Endothelial cell of umbilical vein (primary cell): ENCODE measurements at regions of chr19 and their contacts with region 1.

Region 1: GRCh38 chr19:5622463-5623396 is at the starts of genes SAFB and SAFB2:
- DNase-seq: peak; percentile 100
- H3K4me3 ChIP-seq: peak within 1 kb of the TSS; percentile 82 to 96 (median 93)
- H3K27ac ChIP-seq: peak within 1 kb of the TSS; percentile 63
- H3K4me1 ChIP-seq: peaks cover 28% of the 10 kb centered on the region
- H3K27me3 ChIP-seq: no peaks in the 10 kb centered on the region
- CTCF ChIP-seq: no peak
- POLR2A ChIP-seq: peak; percentile 94
- total RNA-seq, gene SAFB: 96.8 and 109 TPM in 2 replicates
- total RNA-seq, gene SAFB2: 83.7 and 85.9 TPM in 2 replicates

Region 2: DNA sequence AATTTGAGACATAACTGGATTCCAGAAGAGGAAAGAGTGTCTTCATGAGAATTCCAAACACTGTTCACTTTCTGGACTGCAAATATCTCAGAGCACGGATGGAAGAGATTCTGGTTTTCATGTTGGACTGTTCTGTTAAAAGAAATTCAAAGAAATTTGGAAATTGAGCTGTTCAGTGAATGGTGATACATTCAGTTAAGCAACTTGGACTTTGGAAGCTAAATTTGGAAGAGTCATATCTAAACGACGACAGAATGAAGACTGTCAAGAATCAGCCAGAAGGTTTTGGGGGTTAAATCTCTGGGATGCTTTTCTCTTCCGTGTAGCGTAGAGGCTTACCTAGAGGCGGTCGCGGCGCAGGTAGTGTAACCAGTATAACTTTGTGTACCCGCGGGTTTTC is 25.7 kb after region 1 on chr19:
- CTCF ChIA-PET with region 1: no interaction called
- POLR2A ChIA-PET with region 1: no interaction called
- dilution Hi-C with region 1: no loop called
- intact Hi-C with region 1: no loop called
- DNase-seq: no peak
- H3K4me3 ChIP-seq: no peak overlapping the region
- H3K27ac ChIP-seq: no peak overlapping the region
- H3K4me1 ChIP-seq: no peaks in the 10 kb centered on the region
- H3K27me3 ChIP-seq: no peaks in the 10 kb centered on the region
- CTCF ChIP-seq: no peak
- POLR2A ChIP-seq: no peak

Region 3: DNA sequence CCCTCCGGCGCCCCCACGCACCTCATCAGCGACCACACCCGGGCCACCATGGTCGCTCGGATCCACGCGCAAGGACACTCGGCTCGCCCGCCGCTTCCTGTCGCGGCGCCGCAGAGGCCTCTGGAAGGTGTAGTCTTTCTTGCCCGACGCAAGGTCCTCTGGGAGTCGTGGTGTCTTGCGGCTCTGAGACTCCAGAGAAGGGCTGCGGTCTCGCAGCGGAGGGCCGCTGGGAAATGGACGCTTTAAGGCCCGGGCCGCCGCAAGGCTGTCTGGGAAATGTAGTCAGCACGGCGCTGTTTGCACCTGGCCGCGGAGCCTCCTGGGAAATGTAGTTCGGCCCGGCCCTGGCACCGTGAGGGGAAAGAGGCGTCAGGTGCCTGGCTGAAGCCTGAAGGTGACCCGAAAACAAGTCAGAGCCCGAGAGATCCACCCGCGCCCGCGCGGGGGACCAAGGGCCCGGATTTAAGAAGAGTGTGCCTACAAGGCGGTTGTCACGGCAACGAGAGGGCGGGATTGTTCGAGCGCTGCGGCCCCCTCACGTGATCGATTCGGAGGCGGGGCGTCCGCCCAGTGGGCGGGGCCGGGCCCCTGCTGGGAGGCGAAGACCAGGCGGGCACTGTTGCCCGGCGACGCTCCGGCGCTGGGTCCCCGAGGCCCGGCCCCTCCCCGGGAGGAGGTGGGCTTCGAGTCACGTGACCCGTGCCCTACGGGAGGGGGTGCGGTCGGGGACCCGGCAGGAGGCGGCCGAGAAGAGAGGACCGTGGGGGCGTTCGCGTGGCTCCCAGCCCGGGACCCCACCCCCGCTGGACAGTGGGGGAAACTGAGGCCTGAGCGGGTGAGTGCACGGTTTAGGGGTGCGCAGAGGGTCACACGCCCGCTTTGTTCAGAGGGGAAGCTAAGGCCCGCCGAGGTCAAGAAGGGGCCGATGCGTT is 58.0 kb after region 1 on chr19 and contains the starts of genes HSD11B1L and MICOS13:
- CTCF ChIA-PET with region 1: no interaction called
- POLR2A ChIA-PET with region 1: no interaction called
- dilution Hi-C with region 1: no loop called
- intact Hi-C with region 1: loop called (anchors 2 kb)
- DNase-seq: peak; percentile 99
- H3K4me3 ChIP-seq: peak within 1 kb of the TSS; percentile 65 to 91 (median 90)
- H3K27ac ChIP-seq: peak within 1 kb of the TSS; percentile 83
- H3K4me1 ChIP-seq: peaks cover 10% of the 10 kb centered on the region
- H3K27me3 ChIP-seq: no peaks in the 10 kb centered on the region
- CTCF ChIP-seq: no peak
- POLR2A ChIP-seq: peak; percentile 88
- total RNA-seq, gene HSD11B1L: 4.4 and 5.0 TPM in 2 replicates
- total RNA-seq, gene MICOS13: 53.0 and 55.3 TPM in 2 replicates

Region 4: GRCh38 chr19:5719961-5720790 is 97.4 kb after region 1 on chr19 and contains the starts of genes CATSPERD and LONP1:
- CTCF ChIA-PET with region 1: interaction called, 4 read pairs
- POLR2A ChIA-PET with region 1: no interaction called
- dilution Hi-C with region 1: no loop called
- intact Hi-C with region 1: loop called (anchors 1 kb)
- DNase-seq: peak; percentile 99
- H3K4me3 ChIP-seq: peak within 1 kb of the TSS; percentile 52 to 79 (median 75)
- H3K27ac ChIP-seq: peak within 1 kb of the TSS; percentile 85
- H3K4me1 ChIP-seq: peaks cover 15% of the 10 kb centered on the region
- H3K27me3 ChIP-seq: no peaks in the 10 kb centered on the region
- CTCF ChIP-seq: peak; percentile 92 to 98
- POLR2A ChIP-seq: peak; percentile 75
- total RNA-seq, gene CATSPERD: not detected in 2 replicates
- total RNA-seq, gene LONP1: 95.1 and 95.7 TPM in 2 replicates